MCF 10A (cell line): ENCODE measurements at regions of chr4 and their contacts with region 1.

Region 1: GRCh38 chr4:49063670-49064069 is 77.6 kb downstream of the CWH43 start:
- DNase-seq: peak; percentile 65
- H3K4me3 Mint-ChIP-seq: no peak overlapping the region
- H3K27ac Mint-ChIP-seq: no peak overlapping the region
- H3K4me1 Mint-ChIP-seq: no peaks in the 10 kb centered on the region
- H3K27me3 Mint-ChIP-seq: no peaks in the 10 kb centered on the region
- CTCF ChIP-seq: no peak

Region 2: GRCh38 chr4:48388525-48389154 is 675.0 kb before region 1 on chr4:
- CTCF ChIA-PET with region 1: no interaction called
- POLR2A ChIA-PET with region 1: no interaction called
- intact Hi-C with region 1: no loop called
- DNase-seq: no peak
- H3K4me3 Mint-ChIP-seq: no peak overlapping the region
- H3K27ac Mint-ChIP-seq: no peak overlapping the region
- H3K4me1 Mint-ChIP-seq: peaks cover 7% of the 10 kb centered on the region
- H3K27me3 Mint-ChIP-seq: no peaks in the 10 kb centered on the region
- CTCF ChIP-seq: no peak

Region 3: GRCh38 chr4:48470570-48470969 is 593.1 kb before region 1 on chr4:
- CTCF ChIA-PET with region 1: no interaction called
- POLR2A ChIA-PET with region 1: no interaction called
- intact Hi-C with region 1: no loop called
- DNase-seq: no peak
- H3K4me3 Mint-ChIP-seq: no peak overlapping the region
- H3K27ac Mint-ChIP-seq: no peak overlapping the region
- H3K4me1 Mint-ChIP-seq: no peaks in the 10 kb centered on the region
- H3K27me3 Mint-ChIP-seq: no peaks in the 10 kb centered on the region
- CTCF ChIP-seq: no peak

Region 4: GRCh38 chr4:48602222-48602621 is 461.4 kb before region 1 on chr4:
- CTCF ChIA-PET with region 1: no interaction called
- POLR2A ChIA-PET with region 1: no interaction called
- intact Hi-C with region 1: no loop called
- DNase-seq: peak; percentile 30
- H3K4me3 Mint-ChIP-seq: no peak overlapping the region
- H3K27ac Mint-ChIP-seq: no peak overlapping the region
- H3K4me1 Mint-ChIP-seq: peaks cover 10% of the 10 kb centered on the region
- H3K27me3 Mint-ChIP-seq: no peaks in the 10 kb centered on the region
- CTCF ChIP-seq: no peak

Region 5: DNA sequence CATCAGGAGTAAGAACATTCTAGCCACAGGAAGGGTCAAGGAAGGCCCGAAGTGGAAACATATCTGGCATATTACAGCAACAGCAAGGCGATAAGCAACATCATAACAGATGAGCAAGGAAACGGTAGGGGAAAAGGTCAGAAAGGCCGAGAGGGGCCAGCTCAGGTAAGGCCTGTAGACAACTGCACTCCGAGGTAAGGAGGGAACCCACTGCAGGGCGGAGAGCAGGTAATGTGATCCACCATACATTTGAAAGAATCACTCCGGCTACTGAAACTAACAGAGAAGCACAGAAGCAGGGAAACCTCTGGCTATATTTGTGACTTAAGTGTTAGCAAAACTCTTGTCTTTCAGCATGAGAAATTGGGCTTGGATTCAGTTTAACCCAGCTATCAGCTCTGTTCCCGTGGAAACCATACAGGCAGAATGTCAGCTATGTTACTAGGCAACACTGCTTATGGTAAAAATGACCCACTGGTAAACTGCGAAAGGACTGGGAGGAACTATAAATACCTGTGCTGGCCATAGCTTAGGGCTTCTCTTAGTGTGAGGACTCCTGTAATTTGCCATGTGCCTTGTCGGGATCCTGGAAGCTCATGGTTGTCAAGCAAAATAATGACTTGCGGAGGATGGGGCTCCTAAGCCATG is 314.6 kb before region 1 on chr4:
- CTCF ChIA-PET with region 1: no interaction called
- POLR2A ChIA-PET with region 1: no interaction called
- intact Hi-C with region 1: no loop called
- DNase-seq: no peak
- H3K4me3 Mint-ChIP-seq: no peak overlapping the region
- H3K27ac Mint-ChIP-seq: no peak overlapping the region
- H3K4me1 Mint-ChIP-seq: peaks cover 41% of the 10 kb centered on the region
- H3K27me3 Mint-ChIP-seq: no peaks in the 10 kb centered on the region
- CTCF ChIP-seq: no peak

Region 6: GRCh38 chr4:49000806-49001205 is 62.9 kb before region 1 on chr4:
- CTCF ChIA-PET with region 1: no interaction called
- POLR2A ChIA-PET with region 1: no interaction called
- intact Hi-C with region 1: loop called (anchors 10 kb)
- DNase-seq: peak; percentile 23
- H3K4me3 Mint-ChIP-seq: no peak overlapping the region
- H3K27ac Mint-ChIP-seq: no peak overlapping the region
- H3K4me1 Mint-ChIP-seq: no peaks in the 10 kb centered on the region
- H3K27me3 Mint-ChIP-seq: peaks cover 4% of the 10 kb centered on the region
- CTCF ChIP-seq: no peak